ENCODE measurements at regions of chr12 and their contacts with region 1.

Region 1: DNA sequence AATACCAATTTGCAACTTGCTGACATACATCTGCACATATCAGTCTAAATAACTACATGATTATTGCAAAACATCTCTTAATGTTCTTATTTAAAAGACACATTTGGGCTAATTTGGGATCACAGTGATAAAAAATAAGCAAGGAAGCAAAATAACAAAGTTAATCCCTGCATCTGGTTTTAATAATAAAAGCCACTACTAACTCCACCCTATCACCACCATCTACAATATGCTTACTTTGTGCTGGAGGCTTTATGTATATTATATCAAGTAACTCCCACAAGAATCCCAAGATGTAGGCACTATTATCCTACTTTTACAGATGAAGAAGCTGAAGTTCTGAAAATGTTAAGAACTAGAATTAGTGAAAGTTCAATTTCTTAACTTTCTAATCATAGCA is 45.7 kb downstream of the TAOK3 start:
- DNase-seq: no peak
- ATAC-seq: no peak
- H3K4me3 ChIP-seq: no peak overlapping the region
- H3K27ac ChIP-seq: no peak overlapping the region
- H3K4me1 ChIP-seq: peaks cover 14% of the 10 kb centered on the region
- H3K27me3 ChIP-seq: no peaks in the 10 kb centered on the region
- CTCF ChIP-seq: no peak

Region 2: DNA sequence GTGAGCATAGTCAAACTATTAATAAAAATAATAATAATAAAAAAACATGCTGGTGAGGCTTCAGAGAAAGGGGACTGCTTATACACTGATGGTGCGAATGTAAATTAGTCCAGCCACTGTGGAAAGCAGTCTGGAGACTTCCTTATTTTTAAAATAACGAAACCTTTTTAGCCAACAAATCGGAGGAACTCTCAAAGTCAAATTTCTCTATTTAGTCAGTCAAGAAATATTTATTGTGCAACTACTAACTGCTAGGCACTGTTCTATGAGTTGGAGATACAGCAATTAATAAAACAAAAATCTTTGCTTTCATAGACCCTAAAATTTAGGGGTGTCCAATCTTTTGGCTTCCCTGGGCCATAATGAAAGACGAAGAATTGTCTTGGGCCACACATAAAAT is 34.9 kb after region 1 on chr12:
- intact Hi-C with region 1: loop called in 1 of 2 experiments (anchors 5 kb)
- DNase-seq: no peak
- ATAC-seq: no peak
- H3K4me3 ChIP-seq: no peak overlapping the region
- H3K27ac ChIP-seq: no peak overlapping the region
- H3K4me1 ChIP-seq: peaks cover 7% of the 10 kb centered on the region
- H3K27me3 ChIP-seq: no peaks in the 10 kb centered on the region
- CTCF ChIP-seq: no peak

Region 3: DNA sequence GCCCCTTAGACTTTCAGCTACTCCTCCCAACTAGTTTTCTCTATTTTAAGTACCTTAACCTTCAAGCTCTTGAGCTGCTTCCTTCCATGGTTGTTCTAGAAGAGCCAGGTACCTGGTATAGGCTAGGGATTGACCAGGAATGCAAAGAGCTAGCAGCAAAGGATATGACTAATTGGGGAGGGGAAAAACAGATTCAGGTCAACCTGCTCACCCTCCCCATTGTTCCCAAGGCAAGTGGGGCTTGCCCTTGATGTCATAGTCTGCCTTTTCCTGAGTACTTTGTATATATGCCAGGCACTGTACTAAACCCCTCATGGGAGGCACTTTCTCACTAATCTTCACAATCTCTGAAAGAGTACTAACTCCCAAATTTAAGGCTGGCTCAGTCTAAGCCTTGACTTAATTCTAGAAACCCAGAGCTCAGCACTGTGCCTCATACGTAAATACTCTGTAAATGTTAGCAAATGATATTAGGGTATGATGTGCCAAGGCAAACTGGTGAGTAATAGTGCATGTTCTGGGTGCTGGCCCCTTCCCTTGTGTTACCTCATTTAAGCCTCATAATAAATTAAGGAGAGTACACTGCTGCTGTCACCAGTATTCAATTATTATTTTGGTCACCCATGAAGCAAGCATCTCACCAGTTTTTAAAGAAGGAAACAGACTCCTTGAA is 91.5 kb after region 1 on chr12:
- intact Hi-C with region 1: no loop called
- DNase-seq: no peak
- ATAC-seq: peak; percentile 37 to 94 (median 82)
- H3K4me3 ChIP-seq: no peak overlapping the region
- H3K27ac ChIP-seq: no peak overlapping the region
- H3K4me1 ChIP-seq: no peaks in the 10 kb centered on the region
- H3K27me3 ChIP-seq: no peaks in the 10 kb centered on the region
- CTCF ChIP-seq: no peak

Region 4: GRCh38 chr12:118958520-118958919 is 631.5 kb after region 1 on chr12:
- intact Hi-C with region 1: no loop called
- DNase-seq: no peak
- ATAC-seq: no peak
- H3K4me3 ChIP-seq: no peak overlapping the region
- H3K27ac ChIP-seq: no peak overlapping the region
- H3K4me1 ChIP-seq: no peaks in the 10 kb centered on the region
- H3K27me3 ChIP-seq: peaks cover 0 to 5% (median 0%) of the 10 kb centered on the region in 3 donors
- CTCF ChIP-seq: no peak